Heart left ventricle (tissue), 16 donors: ENCODE measurements at regions of chr19 and their contacts with region 1.

Region 1: DNA sequence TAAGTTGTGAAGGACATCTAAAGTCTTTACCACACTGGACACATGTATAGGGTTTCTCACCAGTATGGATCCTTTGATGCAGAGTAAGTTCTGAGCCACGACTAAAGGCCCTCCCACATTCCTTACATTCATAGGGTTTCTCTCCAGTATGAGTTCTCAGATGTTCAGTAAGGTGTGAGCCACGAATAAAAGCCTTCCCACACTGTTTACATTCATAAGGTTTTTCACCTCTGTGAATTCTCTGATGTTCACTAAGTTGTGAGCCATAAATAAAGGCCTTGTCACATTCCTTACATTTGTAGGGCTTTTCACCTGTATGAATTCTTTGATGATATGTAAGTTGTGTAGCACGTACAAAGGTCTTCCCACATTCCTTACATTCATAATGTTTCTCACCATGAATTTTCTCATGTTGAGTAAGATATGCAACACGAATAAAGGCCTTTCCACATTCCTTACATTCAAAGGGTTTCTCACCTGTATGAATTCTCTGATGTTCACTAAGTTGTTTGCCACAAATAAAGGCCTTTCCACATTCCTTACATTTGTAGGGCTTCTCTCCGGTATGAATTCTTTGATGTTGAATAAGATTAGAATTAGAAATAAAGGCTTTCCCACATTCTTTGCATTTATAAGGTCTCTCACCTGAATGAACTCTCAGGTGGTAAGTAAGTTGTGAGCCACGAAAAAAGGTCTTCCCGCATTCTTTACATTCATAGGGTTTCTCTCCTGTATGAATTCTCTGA is 29.8 kb downstream of the ZNF571 start:
- DNase-seq: no peak
- ATAC-seq: no peak
- H3K4me3 ChIP-seq: no peak overlapping the region
- H3K27ac ChIP-seq: no peak overlapping the region
- H3K4me1 ChIP-seq: no peaks in the 10 kb centered on the region
- H3K27me3 ChIP-seq: no peaks in the 10 kb centered on the region
- CTCF ChIP-seq: no peak
- POLR2A ChIP-seq: no peak

Region 2: DNA sequence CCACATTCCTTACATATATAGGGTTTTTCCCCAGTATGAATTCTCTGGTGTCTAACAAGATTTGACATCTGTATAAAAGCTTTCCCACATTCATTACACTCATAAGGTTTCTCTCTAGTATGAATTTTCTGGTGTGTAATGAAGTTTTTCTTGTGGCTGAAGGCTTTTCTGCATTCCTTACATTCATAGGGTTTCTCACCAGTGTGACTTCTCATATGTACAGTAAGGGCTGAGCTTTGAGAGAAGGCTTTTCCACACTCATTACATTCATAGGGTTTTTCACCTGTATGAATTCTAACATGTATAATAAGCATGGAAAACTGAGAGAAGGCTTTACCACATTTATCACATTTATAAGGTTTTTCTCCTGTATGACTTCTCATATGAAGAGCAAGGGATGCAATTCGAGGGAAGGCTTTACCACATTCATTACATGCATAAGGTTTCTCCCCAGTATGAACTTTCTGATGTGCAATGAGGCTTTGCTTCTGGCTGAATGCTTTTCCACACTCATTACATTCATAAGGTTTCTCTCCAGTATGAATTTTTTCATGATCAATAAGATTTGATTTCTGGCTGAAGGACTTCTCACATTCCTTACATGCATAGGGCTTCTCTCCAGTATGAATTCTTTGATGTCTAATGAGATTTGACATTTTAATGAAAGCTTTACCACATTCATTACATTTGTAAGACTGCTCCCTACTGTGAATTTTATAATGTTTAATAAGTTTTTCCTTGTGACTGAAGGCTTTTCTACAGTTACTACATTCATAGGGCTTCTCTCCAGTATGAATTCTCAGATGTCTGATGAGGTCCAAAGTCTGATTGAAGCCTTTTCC is 151.3 kb before region 1 on chr19:
- intact Hi-C with region 1: loop called in 1 of 10 experiments (anchors 10 kb)
- DNase-seq: no peak
- ATAC-seq: no peak
- H3K4me3 ChIP-seq: no peak overlapping the region
- H3K27ac ChIP-seq: no peak overlapping the region
- H3K4me1 ChIP-seq: no peaks in the 10 kb centered on the region
- H3K27me3 ChIP-seq: no peaks in the 10 kb centered on the region
- CTCF ChIP-seq: no peak
- POLR2A ChIP-seq: no peak

Region 3: GRCh38 chr19:37669336-37669963 is 104.7 kb after region 1 on chr19:
- intact Hi-C with region 1: no loop called
- DNase-seq: no peak
- ATAC-seq: no peak
- H3K4me3 ChIP-seq: no peak overlapping the region
- H3K27ac ChIP-seq: no peak overlapping the region
- H3K4me1 ChIP-seq: no peaks in the 10 kb centered on the region
- H3K27me3 ChIP-seq: no peaks in the 10 kb centered on the region
- CTCF ChIP-seq: no peak
- POLR2A ChIP-seq: no peak